Activated naive CD8-positive, alpha-beta T cell treated with anti-CD3 and anti-CD28 coated beads, Interleukin-2, amount 10 ng/mL, durations not matched to agents 7 days and 5 days (primary cell): ENCODE measurements at regions of chr6 and their contacts with region 1.

Region 1: GRCh38 chr6:143450453-143451371 is at the starts of genes ADAT2 and PEX3:
- DNase-seq: peak; percentile 94
- ATAC-seq: peak; percentile 98
- H3K4me3 Mint-ChIP-seq: peak within 1 kb of the TSS; percentile 99
- H3K27ac Mint-ChIP-seq: peak within 1 kb of the TSS; percentile 99
- H3K4me1 Mint-ChIP-seq: peaks cover 20% of the 10 kb centered on the region
- H3K27me3 Mint-ChIP-seq: no peaks in the 10 kb centered on the region
- total RNA-seq, gene ADAT2: 22.8 to 27.0 TPM
- total RNA-seq, gene PEX3: 21.0 TPM

Region 2: DNA sequence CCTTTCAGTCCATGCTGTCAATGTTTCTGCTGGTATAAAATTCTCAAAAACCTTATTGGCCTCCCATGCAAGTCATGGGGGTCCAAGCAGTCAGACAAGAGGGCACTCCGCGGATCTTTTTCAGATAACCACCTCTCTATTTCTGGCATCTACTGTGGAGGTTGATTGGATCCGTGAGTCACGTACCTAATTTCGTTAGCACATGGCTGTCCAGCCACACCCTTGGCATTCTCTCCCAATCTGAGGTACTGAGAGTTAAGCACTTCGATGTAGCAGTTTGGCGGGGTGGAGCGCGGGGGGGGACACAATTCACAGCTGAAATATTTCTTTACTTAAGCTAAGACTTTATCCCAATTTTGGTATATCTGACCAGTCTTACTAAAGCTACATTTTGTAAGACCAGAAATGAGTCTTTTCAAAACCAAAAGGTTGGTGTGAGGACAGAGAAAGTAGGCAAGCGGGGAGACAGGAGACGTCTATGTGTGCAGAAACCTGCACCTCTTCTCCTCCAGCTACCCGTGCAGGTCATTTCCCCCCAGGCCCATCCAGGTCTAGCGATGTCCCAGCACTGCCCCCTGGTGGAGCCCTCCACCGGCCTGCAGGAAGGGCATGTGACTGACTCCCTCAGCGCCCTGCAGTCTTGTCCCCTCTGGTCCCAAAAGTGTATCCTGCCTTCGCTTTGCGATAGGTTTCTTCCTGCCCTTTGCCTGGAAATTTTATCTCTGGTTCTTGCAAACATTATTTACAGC is 113.3 kb before region 1 on chr6:
- POLR2A ChIA-PET with region 1: no interaction called
- DNase-seq: peak; percentile 61
- ATAC-seq: peak; percentile 47
- H3K4me3 Mint-ChIP-seq: no peak overlapping the region
- H3K27ac Mint-ChIP-seq: no peak overlapping the region
- H3K4me1 Mint-ChIP-seq: peaks cover 2% of the 10 kb centered on the region
- H3K27me3 Mint-ChIP-seq: no peaks in the 10 kb centered on the region

Region 3: GRCh38 chr6:143468026-143468425 is 17.3 kb after region 1 on chr6:
- POLR2A ChIA-PET with region 1: no interaction called
- DNase-seq: no peak
- ATAC-seq: no peak
- H3K4me3 Mint-ChIP-seq: no peak overlapping the region
- H3K27ac Mint-ChIP-seq: no peak overlapping the region
- H3K4me1 Mint-ChIP-seq: no peaks in the 10 kb centered on the region
- H3K27me3 Mint-ChIP-seq: no peaks in the 10 kb centered on the region

Region 4: GRCh38 chr6:143510991-143511891 is 60.5 kb after region 1 on chr6 and contains the start of gene FUCA2:
- POLR2A ChIA-PET with region 1: interaction called, 17 read pairs
- DNase-seq: peak; percentile 71
- ATAC-seq: peak; percentile 78
- H3K4me3 Mint-ChIP-seq: peak within 1 kb of the TSS; percentile 93
- H3K27ac Mint-ChIP-seq: peak within 1 kb of the TSS; percentile 97
- H3K4me1 Mint-ChIP-seq: peaks cover 21% of the 10 kb centered on the region
- H3K27me3 Mint-ChIP-seq: peaks cover 2% of the 10 kb centered on the region
- total RNA-seq, gene FUCA2: 12.1 to 13.4 TPM